Cardiac septum (tissue), 1 donor: ENCODE measurements at regions of chr15 and their contacts with region 1.

Region 1: DNA sequence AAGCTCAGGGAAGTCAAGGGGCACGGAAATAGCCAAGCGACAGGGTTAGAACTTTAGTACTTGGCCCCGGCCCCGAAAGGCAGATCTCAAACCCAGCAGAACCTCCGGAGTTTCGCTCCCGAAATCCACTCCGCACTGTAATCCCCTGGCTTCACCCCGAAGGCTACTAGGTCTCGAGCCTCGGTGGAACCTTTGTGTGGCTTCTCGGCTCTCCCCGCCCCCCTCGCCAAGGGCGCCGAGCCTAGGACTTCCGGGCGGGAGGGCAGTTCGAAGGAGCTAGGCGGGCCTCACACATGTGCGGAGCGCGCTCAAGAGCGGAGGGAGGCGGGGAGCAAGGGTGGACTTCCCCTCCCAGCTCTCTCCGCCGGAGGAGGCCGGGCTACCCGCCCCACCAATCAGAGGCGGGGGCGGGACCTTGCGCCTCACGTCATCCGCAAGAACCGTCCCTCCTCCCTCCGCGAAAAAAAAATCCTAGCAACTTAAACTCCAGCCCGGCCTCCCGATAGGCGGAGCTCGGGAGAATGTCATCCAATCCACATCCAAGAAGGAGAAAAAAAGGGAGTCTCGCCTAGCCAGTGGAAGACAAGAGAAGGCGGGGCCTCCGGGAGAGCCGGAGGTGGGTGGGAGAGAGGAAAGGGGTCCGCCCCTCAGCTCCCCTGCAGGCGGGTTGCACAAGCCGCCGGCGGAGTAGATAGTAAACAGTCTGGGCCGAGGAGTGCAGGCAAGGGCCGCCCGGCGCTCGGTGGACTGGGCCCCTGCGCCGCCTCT is 2.4 kb upstream of the SIN3A start:
- DNase-seq: peak; percentile 99

Region 2: GRCh38 chr15:75367913-75368688 is 85.8 kb before region 1 on chr15 and contains the start of gene MAN2C1:
- intact Hi-C with region 1: loop called (anchors 5 kb)
- DNase-seq: peak; percentile 97
- total RNA-seq, gene MAN2C1: 153 TPM

Region 3: DNA sequence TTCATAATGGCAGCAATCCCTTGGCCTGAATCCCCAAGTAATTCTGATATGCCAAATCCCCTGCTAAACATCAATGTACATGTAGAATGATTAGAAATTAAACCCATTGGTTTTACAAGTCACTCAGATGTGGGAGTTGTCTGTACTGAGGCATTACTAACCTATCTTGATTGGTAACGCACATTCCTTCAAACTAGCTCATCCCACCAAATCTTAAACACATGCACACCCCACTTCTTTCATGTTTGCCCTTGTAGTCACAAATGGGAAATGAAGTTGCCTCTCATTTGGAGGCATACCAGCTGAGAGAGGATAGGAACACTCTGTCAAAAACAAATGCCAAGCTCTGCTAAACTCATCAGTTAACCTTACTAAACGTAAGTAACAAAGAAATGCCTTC is 56.4 kb before region 1 on chr15:
- intact Hi-C with region 1: no loop called
- DNase-seq: no peak

Region 4: GRCh38 chr15:75578948-75579920 is 125.3 kb after region 1 on chr15 and contains the start of gene PTPN9:
- intact Hi-C with region 1: loop called (anchors 10 kb)
- DNase-seq: peak; percentile 90
- total RNA-seq, gene PTPN9: 8.8 TPM

Region 5: GRCh38 chr15:75625542-75626347 is 171.9 kb after region 1 on chr15 and contains the start of gene SNUPN:
- intact Hi-C with region 1: loop called (anchors 2 kb)
- DNase-seq: peak; percentile 98
- total RNA-seq, gene SNUPN: 13.6 TPM

Region 6: DNA sequence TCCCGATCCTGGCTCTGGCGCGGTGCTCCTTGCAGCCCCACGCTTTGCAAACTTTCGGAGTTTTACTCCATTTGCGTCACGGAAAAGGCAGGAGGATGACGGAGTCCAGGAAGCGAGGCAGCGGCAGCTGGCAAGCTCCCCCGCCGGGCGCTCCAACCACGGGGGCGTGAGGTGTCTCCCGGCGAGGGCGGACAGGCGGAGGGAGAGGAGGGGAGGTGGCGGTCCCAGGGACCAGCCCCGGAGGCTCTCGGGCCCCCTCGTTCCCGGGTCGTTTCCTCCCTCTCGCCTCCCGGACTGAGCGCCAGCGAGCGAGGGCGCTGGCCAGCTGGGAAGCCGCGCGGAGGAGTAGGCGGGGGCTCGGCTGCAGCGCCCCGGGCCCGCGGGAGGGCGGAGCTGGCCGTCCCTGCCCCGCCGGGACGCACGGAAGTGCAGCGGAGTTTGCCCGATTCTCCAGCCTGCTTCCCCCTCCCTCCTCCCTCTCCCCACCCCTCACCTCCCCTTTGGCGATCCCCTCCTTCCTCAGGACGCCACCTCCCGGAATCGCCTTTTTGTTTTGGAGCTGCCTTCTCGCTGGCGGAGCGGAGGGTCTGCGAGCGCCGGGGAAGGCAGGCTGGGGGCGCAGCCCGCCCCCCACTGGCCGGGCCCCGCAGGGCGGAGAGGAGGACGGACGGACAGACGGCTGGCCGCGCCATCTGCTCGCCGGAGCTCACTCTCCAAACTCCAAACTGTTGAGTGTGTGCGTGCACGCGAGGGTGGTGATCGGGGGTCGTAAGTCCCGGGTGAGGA is 193.7 kb after region 1 on chr15 and contains the start of gene SNX33:
- intact Hi-C with region 1: loop called (anchors 5 kb)
- DNase-seq: peak; percentile 90
- total RNA-seq, gene SNX33: 10.3 TPM

Region 7: DNA sequence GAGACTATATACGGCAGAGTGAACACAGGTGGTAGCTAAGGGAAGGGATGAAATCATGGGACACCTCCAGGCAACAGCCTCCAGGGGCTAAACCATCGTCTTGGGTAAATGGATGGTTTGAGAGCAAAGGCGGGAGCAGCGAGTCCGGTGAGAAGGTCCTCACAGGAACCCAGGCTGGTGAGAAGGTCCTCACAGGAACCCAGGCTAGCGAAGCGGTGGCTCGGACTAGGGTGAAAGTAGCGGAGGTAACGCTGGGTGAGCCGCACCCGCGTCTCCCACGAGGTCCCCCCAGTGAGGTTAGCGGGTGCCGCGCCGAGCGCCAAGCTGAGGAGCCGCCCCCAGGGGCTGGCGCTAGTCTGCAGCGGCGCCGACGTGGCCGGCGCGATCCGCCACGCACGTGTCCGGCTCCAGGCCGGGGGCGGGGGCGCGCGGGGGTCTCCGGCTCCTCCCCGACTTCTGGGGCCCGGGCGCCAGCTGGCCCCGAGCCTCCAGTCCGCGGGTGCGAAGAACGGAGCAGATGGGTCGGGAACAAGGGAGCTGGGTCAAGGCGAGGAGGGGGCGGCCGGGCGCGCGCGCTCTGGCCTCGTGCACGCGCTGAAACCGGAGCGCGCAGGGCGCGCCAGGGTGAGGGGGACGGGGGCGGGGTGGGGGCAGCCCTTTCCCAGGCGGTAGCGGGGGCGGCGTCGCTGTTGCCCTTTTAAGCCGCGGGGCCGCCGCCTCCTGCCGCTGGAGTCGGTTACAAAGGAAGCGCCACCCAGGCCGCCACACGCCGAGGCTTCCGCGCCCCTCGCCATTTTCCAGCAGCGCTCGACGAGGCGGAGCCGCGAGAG is 389.1 kb after region 1 on chr15 and contains the start of gene UBE2Q2:
- intact Hi-C with region 1: loop called (anchors 5 kb)
- DNase-seq: peak; percentile 88
- total RNA-seq, gene UBE2Q2: 38.3 TPM